ENCODE measurements at regions of chr13 and their contacts with region 1.

Region 1: DNA sequence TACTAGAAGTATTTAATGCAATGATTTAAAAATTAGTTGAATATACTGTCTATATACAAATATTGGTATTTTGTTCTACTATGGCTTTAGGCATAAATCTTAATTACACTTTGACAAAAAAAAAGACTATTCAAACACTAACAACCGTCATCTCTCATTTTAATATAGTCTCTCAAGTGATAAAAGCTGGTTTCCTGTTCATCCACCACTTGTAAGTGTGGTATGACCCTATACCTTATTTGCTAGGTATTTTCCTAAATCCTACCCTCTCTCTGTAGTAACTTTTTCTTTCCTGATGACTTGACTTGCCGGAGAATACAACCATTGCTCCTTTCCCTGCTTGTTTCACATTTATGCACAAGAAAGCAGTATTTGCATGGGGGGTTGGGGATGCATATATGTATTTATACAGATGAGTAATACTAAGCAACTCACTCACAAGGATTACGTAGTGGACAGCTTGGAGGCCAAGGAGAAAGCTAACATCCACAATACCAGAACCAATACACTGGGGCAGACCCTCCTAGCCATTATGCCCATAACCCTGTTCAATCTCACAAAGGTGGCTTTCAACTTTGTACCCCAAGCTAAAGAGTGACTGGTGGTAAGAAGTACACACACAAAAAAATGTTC is 12.7 kb upstream of the EFNB2 start:
- DNase-seq: no peak
- ATAC-seq: no peak

Region 2: DNA sequence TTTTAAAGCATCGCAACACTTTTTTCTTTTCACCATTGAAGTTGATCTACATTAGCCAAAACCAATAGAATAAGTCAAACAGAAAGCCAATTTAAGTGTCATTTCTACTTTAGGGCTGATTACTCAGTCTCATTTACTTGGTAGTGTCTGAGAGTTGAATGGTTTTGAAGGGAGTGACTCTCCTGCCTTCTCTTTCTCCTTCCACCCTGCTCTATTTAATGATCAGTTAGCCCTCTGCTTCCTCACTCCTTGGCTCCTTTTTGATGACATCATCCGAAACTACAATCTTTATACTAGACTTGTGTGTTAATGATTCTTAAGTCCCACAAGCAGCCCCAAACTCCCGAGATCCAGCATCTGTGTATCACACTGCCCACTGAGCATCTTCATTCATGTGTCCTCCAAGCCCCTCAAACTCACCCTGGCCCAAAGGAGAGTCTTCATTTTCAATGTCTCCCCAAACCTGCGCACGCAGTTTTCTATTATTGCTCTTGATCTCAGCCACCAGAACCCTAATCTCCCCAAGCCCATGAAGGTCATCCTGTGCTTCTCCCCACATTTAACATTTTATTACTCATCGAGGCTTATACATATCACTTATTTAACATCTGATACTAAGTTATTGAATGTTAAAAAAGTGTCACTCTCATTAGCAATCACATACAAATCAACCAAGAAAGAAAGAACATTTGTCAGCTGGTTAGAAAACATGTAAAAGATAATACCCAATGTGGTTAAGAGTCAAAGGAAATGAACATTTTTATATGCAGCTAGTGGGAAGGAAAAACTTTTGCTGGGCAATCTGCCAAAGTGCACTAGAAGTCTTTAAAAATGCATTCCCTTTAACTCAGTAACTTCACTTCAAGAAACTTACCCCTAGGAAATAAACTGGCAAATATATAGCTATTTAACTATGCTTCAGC is 52.0 kb after region 1 on chr13:
- intact Hi-C with region 1: no loop called
- DNase-seq: no peak
- ATAC-seq: no peak

Region 3: GRCh38 chr13:106619688-106620555 is 71.7 kb after region 1 on chr13:
- intact Hi-C with region 1: loop called (anchors 10 kb)
- DNase-seq: no peak
- ATAC-seq: peak; percentile 96

Region 4: GRCh38 chr13:107157271-107157670 is 609.1 kb after region 1 on chr13:
- intact Hi-C with region 1: no loop called
- DNase-seq: no peak
- ATAC-seq: peak; percentile 45